ENCODE measurements at regions of chr1 and their contacts with region 1.

Region 1: DNA sequence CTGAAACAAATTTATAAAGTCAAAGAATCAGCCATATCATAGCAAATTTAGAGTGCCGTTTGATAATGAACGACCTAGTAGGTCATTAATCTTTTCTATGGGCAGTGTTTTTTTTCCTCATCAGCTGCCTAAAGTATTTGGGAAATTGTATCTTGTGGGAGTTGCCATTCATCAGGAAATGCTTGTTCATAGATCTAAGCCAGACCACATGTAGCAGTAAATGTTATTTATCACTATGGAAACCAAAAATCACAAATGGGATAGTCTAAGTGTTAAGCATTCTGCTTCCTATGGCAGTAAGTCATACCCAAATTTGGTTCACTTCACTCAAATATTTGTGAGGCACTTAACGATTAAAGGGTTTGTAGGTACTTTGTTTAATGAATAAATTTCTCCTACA is 52.9 kb downstream of the LRRC8D start:
- DNase-seq: peak; percentile 86
- H3K4me3 ChIP-seq: no peak overlapping the region
- H3K27ac ChIP-seq: peak overlapping the region; percentile 72
- H3K4me1 ChIP-seq: peaks cover 70% of the 10 kb centered on the region
- H3K27me3 ChIP-seq: no peaks in the 10 kb centered on the region
- CTCF ChIP-seq: no peak

Region 2: GRCh38 chr1:90834886-90835660 is 961.3 kb after region 1 on chr1:
- CTCF ChIA-PET with region 1: interaction called, 11 read pairs
- POLR2A ChIA-PET with region 1: no interaction called
- intact Hi-C with region 1: no loop called
- DNase-seq: peak; percentile 77
- H3K4me3 ChIP-seq: no peak overlapping the region
- H3K27ac ChIP-seq: no peak overlapping the region
- H3K4me1 ChIP-seq: peaks cover 8% of the 10 kb centered on the region
- H3K27me3 ChIP-seq: peaks cover 14% of the 10 kb centered on the region
- CTCF ChIP-seq: no peak

Measured in A673 (cell line).